Left ventricle myocardium superior (tissue), 1 donor: ENCODE measurements at regions of chr4 and their contacts with region 1.

Region 1: DNA sequence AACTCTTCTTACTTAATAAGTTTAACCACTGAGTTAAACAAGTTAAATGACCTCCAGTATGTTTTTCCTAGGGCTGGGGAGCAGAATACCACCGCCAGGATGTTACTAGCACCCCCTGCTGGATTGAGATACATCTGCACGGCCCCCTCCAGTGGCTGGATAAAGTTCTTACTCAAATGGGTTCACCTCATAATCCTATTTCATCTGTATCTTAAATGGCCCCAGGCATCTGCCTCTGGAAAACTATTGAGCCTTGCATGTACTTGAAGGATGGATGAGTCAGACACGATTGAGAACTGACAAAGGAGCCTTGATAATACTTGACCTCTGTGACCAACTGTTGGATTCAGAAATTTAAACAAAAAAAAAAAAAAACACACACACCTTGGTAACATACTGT is 61.5 kb upstream of the MMAA start:
- DNase-seq: peak; percentile 37
- ATAC-seq: peak; percentile 86

Region 2: DNA sequence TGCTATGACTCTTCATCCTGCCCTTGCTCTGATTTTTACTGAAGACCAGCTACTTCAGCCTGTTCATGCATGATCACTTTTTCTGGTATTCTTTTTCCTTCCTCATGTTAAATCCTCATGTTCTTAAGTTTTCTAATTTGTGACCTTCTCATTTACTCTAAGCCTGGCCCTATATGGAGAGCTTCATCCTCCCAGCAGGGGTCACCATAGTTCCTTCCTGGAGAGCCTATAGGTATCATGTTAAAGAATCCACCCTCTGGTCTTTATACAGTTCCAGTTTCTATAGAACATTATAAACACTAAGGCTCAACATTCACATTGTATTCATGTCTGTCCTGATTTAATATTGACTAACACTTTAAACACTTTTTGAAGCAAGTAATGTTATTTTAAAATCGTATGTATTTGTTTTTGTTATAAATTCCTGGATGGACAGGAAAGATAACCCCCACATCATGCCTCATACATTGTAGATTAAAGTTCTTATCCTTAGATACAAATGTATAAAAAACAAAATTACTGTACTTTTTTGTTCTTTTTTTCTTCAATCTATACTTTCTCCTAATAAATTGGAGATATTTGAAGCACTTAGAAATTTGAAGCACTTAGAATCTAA is 323.5 kb before region 1 on chr4:
- intact Hi-C with region 1: loop called (anchors 5 kb)
- DNase-seq: no peak
- ATAC-seq: peak; percentile 74